ENCODE measurements at regions of chr9 and their contacts with region 1.

Region 1: DNA sequence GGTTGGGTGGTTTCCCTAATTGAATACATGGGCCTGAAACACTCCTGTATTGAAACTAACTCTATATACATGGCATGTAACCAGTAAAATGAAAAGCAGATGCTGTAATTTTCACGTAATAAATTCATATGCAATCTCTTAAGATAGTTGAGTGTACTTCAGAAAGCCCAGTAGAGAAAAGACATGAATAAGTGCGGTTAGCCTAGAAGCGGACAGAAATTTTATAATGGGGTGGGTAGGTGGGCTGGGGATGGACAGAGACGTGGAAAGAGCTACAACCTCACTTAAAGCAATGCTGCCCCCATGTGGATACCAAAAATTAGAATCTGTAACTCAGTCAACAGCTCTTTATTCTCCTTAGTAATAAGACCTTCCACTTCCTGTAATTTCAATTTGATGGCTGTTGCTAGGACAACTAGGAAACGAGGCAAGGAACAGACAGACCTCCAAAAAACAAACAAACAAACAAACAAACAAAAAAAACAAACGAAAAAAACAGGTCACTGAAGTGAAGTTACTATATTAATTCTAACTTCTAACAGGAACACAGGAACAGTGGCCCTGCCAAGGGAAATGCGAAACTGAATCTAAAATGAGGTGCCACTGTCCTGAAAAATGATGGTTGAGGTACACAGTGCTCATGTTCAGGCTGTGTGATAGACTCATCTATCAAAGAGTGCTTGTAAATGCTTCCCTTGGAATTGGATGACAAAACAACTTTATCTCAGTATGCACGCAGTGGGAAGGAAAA is 103.4 kb upstream of the GNA14 start:
- DNase-seq: peak in 1 of 10 donors; percentile 48

Region 2: GRCh38 chr9:77433675-77434445 is 317.7 kb before region 1 on chr9:
- intact Hi-C with region 1: loop called (anchors 5 kb)
- DNase-seq: peak; percentile 52 to 97 (median 76)

Region 3: DNA sequence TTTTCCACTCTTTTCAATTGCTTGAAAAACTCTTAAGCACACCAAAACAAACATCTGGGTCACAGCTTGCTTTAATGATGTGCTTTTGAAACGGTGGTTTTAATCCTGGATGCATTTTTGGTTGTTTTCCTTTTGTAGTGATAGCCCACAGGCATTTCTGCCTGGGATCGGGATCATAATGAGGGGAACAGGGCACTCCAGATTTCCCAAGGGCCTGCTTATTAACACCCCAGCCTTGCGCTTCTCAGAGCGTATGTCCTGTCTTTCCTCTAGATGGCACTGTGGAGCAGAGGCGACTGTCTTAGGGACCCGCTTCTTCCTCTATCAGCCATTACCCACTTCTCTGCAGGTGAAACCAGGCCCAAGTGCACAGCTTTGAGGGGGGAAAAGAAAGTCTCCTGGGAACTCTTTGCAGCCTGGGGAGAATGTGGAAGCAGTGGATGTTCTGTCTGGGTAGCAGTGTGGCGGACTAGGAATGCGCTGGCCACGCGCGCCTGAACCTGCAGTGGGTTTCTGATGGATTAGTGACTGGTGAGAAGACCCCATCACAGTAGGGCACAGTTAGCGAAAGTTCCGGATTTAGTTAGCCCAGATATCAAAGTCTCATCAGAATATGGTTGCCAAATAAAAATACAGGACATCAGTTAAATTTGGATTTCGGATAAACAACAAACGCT is 293.5 kb before region 1 on chr9:
- intact Hi-C with region 1: loop called (anchors 2 kb)
- DNase-seq: peak in 8 of 10 donors; percentile 13 to 92 (median 62)

Region 4: DNA sequence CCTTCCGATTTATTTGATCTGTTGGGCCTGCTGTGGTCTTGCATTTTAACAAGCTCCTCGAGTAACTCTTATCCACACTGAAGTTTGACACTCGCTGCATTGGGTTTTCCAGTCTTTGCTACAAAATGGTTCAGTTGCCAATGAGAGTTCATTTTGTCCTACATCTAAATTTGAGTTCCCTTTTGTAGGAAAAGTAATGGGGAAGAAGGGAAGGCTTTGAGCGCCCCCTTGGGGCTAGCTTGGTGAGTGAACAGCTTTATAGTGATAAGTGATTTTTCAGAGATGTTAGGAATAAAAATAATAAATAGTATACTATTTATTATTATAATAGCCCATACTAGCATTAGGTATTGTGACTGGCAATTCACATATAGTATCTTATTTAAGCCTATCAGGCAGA is 370.0 kb after region 1 on chr9:
- intact Hi-C with region 1: loop called (anchors 10 kb)
- DNase-seq: peak in 9 of 10 donors; percentile 41 to 95 (median 80)

Region 5: GRCh38 chr9:78386773-78387172 is 635.3 kb after region 1 on chr9:
- intact Hi-C with region 1: no loop called
- DNase-seq: no peak